Gastrocnemius medialis (tissue), 4 donors: ENCODE measurements at regions of chr12 and their contacts with region 1.

Region 1: DNA sequence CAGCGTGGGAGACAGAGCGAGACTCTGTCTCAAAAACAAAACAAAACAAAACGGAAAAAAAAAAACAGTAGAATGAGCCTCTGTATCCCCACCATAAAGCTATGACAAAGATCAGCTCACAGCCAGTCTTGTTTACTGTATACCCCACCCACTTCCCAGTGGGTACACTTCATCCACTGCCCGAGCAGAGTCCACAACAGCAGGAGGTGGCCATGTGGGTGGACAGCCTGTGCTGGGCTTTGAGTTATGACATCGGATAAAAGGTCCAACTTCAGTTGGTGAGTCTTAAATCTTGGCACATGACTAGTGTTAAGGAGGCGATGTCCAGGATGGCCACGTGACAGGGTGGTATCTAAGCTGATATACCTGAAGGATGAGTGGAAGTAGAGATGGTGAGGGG is 34.8 kb upstream of the MAPKAPK5 start:
- DNase-seq: no peak
- ATAC-seq: no peak
- H3K4me3 ChIP-seq: no peak overlapping the region
- H3K27ac ChIP-seq: no peak overlapping the region
- H3K4me1 ChIP-seq: no peaks in the 10 kb centered on the region
- H3K27me3 ChIP-seq: no peaks in the 10 kb centered on the region
- CTCF ChIP-seq: no peak
- POLR2A ChIP-seq: no peak

Region 2: GRCh38 chr12:111748151-111748672 is 59.0 kb before region 1 on chr12:
- in situ Hi-C with region 1: loop called in 1 of 4 experiments (anchors 5 kb)
- intact Hi-C with region 1: no loop called
- DNase-seq: no peak
- ATAC-seq: no peak
- H3K4me3 ChIP-seq: no peak overlapping the region
- H3K27ac ChIP-seq: no peak overlapping the region
- H3K4me1 ChIP-seq: peaks cover 0 to 1% of the 10 kb centered on the region in 2 donors
- H3K27me3 ChIP-seq: no peaks in the 10 kb centered on the region
- CTCF ChIP-seq: no peak
- POLR2A ChIP-seq: no peak